Panc1 (cell line): ENCODE measurements at regions of chr7 and their contacts with region 1.

Region 1: DNA sequence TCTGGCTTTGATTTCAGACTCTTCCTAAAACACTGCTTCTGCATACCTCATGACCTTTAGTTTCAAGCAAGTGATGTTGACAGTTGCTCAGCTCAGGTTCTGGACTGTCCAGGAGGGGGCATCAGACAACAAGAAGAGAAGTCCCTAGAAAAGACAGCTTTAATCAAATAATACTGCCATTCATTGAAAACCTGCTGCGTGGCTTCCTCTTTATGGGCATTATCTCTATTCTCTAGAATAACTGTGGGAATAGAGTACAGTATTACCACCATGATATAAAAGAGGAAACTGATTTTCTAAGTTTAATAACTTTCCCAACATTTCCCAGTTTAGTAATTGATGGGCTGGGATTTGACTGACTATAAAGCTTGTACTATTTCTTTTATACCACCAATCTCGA is 170.4 kb downstream of the SNX13 start:
- DNase-seq: peak; percentile 56
- ATAC-seq: peak; percentile 90
- H3K4me3 ChIP-seq: no peak overlapping the region
- H3K27ac ChIP-seq: no peak overlapping the region
- H3K4me1 ChIP-seq: peaks cover 10% of the 10 kb centered on the region; the same call in 1 of the 2 replicates
- H3K27me3 ChIP-seq: no peaks in the 10 kb centered on the region; the same call in 1 of the 2 replicates
- CTCF ChIP-seq: peak; percentile 89

Region 2: DNA sequence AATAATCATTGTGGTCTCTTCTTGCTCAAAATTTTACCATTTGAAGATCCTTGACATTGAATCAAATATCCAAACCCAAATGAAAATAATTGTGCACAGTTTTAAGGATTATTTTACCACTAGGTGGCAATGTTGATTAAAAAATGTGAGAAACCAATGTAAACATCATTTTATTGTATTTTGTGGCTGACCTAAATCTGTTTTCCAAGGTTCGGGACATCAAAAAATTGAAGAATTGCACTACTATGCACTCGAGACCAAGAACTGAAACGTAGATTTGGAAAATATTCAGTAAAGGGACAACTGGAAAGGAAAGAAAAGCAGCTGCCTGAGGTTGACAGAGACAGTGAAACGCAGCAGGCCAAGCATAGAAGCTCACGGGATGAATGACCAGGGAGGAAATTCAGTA is 89.0 kb before region 1 on chr7:
- CTCF ChIA-PET with region 1: interaction called, 10 read pairs
- POLR2A ChIA-PET with region 1: no interaction called
- in situ Hi-C with region 1: no loop called
- intact Hi-C with region 1: no loop called
- DNase-seq: peak; percentile 52
- ATAC-seq: 0 out of 2 replicates have a peak, but pooled peaks have one; percentile 27
- H3K4me3 ChIP-seq: no peak overlapping the region
- H3K27ac ChIP-seq: no peak overlapping the region; the same call in 1 of the 2 replicates
- H3K4me1 ChIP-seq: peaks cover 10% of the 10 kb centered on the region
- H3K27me3 ChIP-seq: no peaks in the 10 kb centered on the region; the same call in 1 of the 2 replicates
- CTCF ChIP-seq: peak; percentile 64

Region 3: GRCh38 chr7:17871815-17872533 is 102.1 kb after region 1 on chr7:
- CTCF ChIA-PET with region 1: no interaction called
- POLR2A ChIA-PET with region 1: no interaction called
- in situ Hi-C with region 1: no loop called
- intact Hi-C with region 1: no loop called
- DNase-seq: no peak
- ATAC-seq: no peak
- H3K4me3 ChIP-seq: no peak overlapping the region
- H3K27ac ChIP-seq: no peak overlapping the region
- H3K4me1 ChIP-seq: no peaks in the 10 kb centered on the region
- H3K27me3 ChIP-seq: no peaks in the 10 kb centered on the region
- CTCF ChIP-seq: no peak

Region 4: GRCh38 chr7:17940302-17940883 is 170.5 kb after region 1 on chr7 and contains the start of gene SNX13:
- CTCF ChIA-PET with region 1: no interaction called
- POLR2A ChIA-PET with region 1: interaction called, 13 read pairs
- in situ Hi-C with region 1: no loop called
- intact Hi-C with region 1: loop called (anchors 5 kb)
- DNase-seq: peak; percentile 65
- ATAC-seq: peak; percentile 97
- H3K4me3 ChIP-seq: peak within 1 kb of the TSS; percentile 88 to 93
- H3K27ac ChIP-seq: peak within 1 kb of the TSS; percentile 93
- H3K4me1 ChIP-seq: peaks cover 16% of the 10 kb centered on the region
- H3K27me3 ChIP-seq: no peaks in the 10 kb centered on the region
- CTCF ChIP-seq: peak; percentile 71
- total RNA-seq, gene SNX13: 53.3 TPM